Natural killer cell (primary cell): ENCODE measurements at regions of chr19 and their contacts with region 1.

Region 1: GRCh38 chr19:49570138-49570856 is 10.1 kb downstream of the NOSIP start:
- DNase-seq: peak; percentile 39 to 96
- ATAC-seq: peak; percentile 66 to 80 (median 67)
- H3K4me3 ChIP-seq: no peak overlapping the region
- H3K4me3 Mint-ChIP-seq: peak overlapping the region; percentile 79
- H3K27ac ChIP-seq: peak overlapping the region; percentile 13
- H3K27ac Mint-ChIP-seq: peak overlapping the region; percentile 89 to 91
- H3K4me1 ChIP-seq: peaks cover 55% of the 10 kb centered on the region
- H3K4me1 Mint-ChIP-seq: peaks cover 25 to 41% of the 10 kb centered on the region in 2 donors
- H3K27me3 ChIP-seq: no peaks in the 10 kb centered on the region
- H3K27me3 Mint-ChIP-seq: no peaks in the 10 kb centered on the region
- CTCF ChIP-seq: peak; percentile 98

Region 2: GRCh38 chr19:49224856-49225255 is 345.4 kb before region 1 on chr19:
- intact Hi-C with region 1: loop called (anchors 2 kb)
- DNase-seq: peak in 1 of 2 donors; percentile 37
- ATAC-seq: peak in 1 of 3 donors; percentile 31
- H3K4me3 ChIP-seq: no peak overlapping the region
- H3K4me3 Mint-ChIP-seq: no peak overlapping the region
- H3K27ac ChIP-seq: no peak overlapping the region
- H3K27ac Mint-ChIP-seq: no peak overlapping the region
- H3K4me1 ChIP-seq: no peaks in the 10 kb centered on the region
- H3K4me1 Mint-ChIP-seq: peaks cover 7 to 8% of the 10 kb centered on the region in 2 donors
- H3K27me3 ChIP-seq: no peaks in the 10 kb centered on the region
- H3K27me3 Mint-ChIP-seq: peaks cover 0 to 9% of the 10 kb centered on the region in 2 donors
- CTCF ChIP-seq: no peak

Region 3: DNA sequence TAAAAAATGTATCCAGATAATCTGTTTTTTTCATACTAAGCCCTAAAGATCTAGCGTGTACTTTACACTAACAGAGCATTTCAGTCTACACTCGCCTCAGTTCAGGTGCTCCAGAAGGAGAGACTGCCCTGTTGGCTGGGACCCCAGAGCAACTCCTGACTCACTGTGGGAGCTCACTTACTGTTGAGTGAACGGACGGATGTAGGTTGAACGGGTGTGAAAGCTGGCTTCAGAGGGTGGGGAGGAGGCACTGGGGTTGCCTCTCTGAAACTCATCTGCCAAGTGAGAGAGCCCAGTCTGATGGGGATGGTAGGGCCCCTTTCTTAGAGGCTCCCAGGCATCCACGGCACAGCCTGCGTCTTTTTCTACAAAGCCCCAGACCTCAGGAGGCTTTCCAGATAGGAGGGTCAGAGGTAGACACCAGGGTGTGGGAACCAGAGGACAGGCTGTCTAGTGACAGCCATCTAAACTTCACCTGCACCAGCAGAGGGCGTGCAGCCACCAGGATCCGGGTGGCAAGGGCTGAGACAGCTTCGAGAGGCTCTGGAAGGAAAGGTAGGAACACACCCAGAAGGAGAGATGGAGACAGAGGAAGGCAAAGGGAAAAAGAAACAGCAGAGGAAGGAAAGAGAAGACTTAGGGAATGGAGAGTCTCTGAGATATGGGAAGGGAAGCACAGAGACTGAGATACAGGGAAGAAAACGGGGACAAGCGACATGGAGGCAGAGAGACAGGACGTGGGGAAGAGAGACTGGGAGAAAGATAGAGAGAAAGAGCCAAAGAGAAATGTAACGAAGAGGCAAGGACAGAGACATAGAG is 178.5 kb before region 1 on chr19:
- intact Hi-C with region 1: loop called (anchors 2 kb)
- DNase-seq: peak; percentile 57 to 91
- ATAC-seq: peak; percentile 72 to 79 (median 77)
- H3K4me3 ChIP-seq: no peak overlapping the region
- H3K4me3 Mint-ChIP-seq: no peak overlapping the region
- H3K27ac ChIP-seq: peak overlapping the region; percentile 26
- H3K27ac Mint-ChIP-seq: peak overlapping the region in 1 of 2 donors; percentile 23
- H3K4me1 ChIP-seq: peaks cover 37% of the 10 kb centered on the region
- H3K4me1 Mint-ChIP-seq: peaks cover 11 to 26% of the 10 kb centered on the region in 2 donors
- H3K27me3 ChIP-seq: no peaks in the 10 kb centered on the region
- H3K27me3 Mint-ChIP-seq: peaks cover 0 to 7% of the 10 kb centered on the region in 2 donors
- CTCF ChIP-seq: peak; percentile 85

Region 4: GRCh38 chr19:49473868-49474544 is 96.3 kb before region 1 on chr19 and contains the start of gene FLT3LG:
- intact Hi-C with region 1: loop called (anchors 1 kb)
- DNase-seq: peak; percentile 90 to 97
- ATAC-seq: peak; percentile 55 to 83 (median 65)
- H3K4me3 ChIP-seq: peak within 1 kb of the TSS; percentile 67
- H3K4me3 Mint-ChIP-seq: peak within 1 kb of the TSS; percentile 95
- H3K27ac ChIP-seq: peak within 1 kb of the TSS; percentile 89
- H3K27ac Mint-ChIP-seq: peak within 1 kb of the TSS; percentile 88 to 94
- H3K4me1 ChIP-seq: peaks cover 70% of the 10 kb centered on the region
- H3K4me1 Mint-ChIP-seq: peaks cover 31 to 55% of the 10 kb centered on the region in 2 donors
- H3K27me3 ChIP-seq: no peaks in the 10 kb centered on the region
- H3K27me3 Mint-ChIP-seq: no peaks in the 10 kb centered on the region
- CTCF ChIP-seq: peak; percentile 94
- total RNA-seq, gene FLT3LG: 44.7 to 65.7 (median 64.8) TPM

Region 5: GRCh38 chr19:49502866-49503581 is 67.3 kb before region 1 on chr19:
- intact Hi-C with region 1: loop called (anchors 1 kb)
- DNase-seq: peak in 1 of 2 donors; percentile 82
- ATAC-seq: peak in 1 of 3 donors; percentile 11
- H3K4me3 ChIP-seq: no peak overlapping the region
- H3K4me3 Mint-ChIP-seq: no peak overlapping the region
- H3K27ac ChIP-seq: peak overlapping the region; percentile 83
- H3K27ac Mint-ChIP-seq: peak overlapping the region; percentile 97
- H3K4me1 ChIP-seq: peaks cover 60% of the 10 kb centered on the region
- H3K4me1 Mint-ChIP-seq: peaks cover 30 to 48% of the 10 kb centered on the region in 2 donors
- H3K27me3 ChIP-seq: no peaks in the 10 kb centered on the region
- H3K27me3 Mint-ChIP-seq: no peaks in the 10 kb centered on the region
- CTCF ChIP-seq: peak; percentile 60

Region 6: DNA sequence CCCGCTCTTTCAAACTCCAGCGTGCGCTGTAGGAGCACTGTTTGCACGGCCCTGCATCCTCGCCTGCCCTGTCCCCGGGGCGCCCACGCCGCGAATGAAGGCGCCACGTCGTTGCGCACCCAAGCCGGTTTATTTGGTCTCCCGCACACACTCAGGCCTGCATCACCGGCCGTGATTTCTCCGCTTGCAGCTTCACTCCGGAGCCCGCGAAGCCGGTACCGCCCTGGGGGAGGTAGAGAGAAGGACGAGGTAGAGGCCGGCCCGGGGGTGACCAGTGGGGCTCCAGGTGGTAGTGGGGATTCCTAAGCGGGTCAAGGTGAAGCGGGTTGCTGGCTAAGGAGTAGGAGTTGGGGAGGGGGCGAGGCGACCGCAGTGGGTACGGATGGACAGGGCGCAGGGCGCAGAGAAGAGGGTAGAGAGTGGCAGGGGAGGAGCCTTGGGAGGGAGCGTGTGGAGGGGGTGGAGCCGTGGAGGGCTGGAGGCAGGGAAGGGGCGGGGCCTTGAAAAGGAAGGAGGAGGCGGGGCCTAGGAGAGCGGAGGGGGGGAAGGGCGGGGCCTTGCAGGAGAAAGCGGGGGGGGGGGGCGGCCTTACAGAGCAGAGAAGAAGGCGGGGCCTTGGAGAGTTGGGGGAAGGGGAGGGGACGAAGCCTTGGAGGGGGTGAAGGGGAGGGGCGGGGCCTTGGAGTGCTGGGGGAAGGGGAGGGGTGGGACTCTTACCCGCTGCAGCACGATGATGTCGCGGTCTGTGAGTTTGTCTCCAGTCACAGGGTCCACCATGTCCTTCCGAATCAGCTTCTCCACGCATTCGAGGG is 14.5 kb before region 1 on chr19:
- intact Hi-C with region 1: loop called (anchors 2 kb)
- DNase-seq: peak in 1 of 2 donors; percentile 92
- ATAC-seq: peak in 2 of 3 donors; percentile 38 to 60
- H3K4me3 ChIP-seq: no peak overlapping the region
- H3K4me3 Mint-ChIP-seq: no peak overlapping the region
- H3K27ac ChIP-seq: peak overlapping the region; percentile 29
- H3K27ac Mint-ChIP-seq: peak overlapping the region; percentile 58 to 89
- H3K4me1 ChIP-seq: peaks cover 73% of the 10 kb centered on the region
- H3K4me1 Mint-ChIP-seq: peaks cover 24 to 38% of the 10 kb centered on the region in 2 donors
- H3K27me3 ChIP-seq: no peaks in the 10 kb centered on the region
- H3K27me3 Mint-ChIP-seq: no peaks in the 10 kb centered on the region
- CTCF ChIP-seq: no peak